HEK293T (cell line): ENCODE measurements at regions of chr6 and their contacts with region 1.

Region 1: GRCh38 chr6:33454009-33454946 is at the start of gene ZBTB9:
- DNase-seq: peak; percentile 98

Region 2: DNA sequence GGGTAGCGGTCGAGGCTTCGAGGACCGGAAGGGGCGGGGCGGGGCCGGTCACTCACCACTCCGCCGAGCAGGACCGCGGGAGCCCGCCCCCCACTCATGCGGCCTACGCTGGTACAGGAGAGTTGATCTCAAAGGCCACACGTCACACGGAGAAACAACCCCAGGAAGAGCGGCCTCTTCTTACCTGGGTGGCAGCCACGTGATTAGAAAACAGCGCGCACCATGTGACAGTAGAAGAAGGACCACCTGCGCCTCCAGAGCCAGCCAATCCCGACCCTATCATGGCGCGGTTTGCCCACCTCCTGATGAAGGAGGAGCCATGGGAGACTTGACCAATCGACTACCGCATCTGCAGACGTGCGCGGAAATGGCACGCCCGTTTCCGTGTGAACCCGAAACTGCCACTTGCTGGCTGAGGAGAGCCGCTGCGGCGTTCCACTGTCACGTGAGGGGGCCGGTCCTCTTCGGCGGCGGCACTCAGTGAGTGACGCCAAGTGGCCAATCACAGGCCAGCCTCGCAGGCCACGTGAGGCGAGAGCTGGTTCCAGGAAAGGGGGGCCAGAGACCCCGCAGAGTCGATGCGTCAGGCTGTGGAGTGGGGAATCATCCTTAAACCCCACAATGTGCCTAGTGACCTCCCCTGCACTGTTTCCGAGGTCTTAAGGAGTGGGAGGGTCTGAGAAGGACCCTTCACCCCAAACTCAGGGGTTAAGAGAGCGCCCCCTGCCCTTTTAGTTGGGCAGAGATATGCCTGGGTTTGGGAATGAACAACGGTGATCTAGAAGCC is 36.2 kb before region 1 on chr6 and contains the start of gene CUTA:
- CTCF ChIA-PET with region 1: no interaction called
- POLR2A ChIA-PET with region 1: interaction called, 12 read pairs
- DNase-seq: peak; percentile 92

Region 3: GRCh38 chr6:33430991-33431879 is 23.0 kb before region 1 on chr6:
- CTCF ChIA-PET with region 1: interaction called, 4 read pairs
- POLR2A ChIA-PET with region 1: interaction called, 13 read pairs
- DNase-seq: peak; percentile 60

Region 4: GRCh38 chr6:33439956-33440648 is 14.2 kb before region 1 on chr6:
- CTCF ChIA-PET with region 1: no interaction called
- POLR2A ChIA-PET with region 1: interaction called, 18 read pairs
- DNase-seq: no peak